Activated B cell treated with CpG ODN at 0.5 μM for 24 hours (primary cell): ENCODE measurements at regions of chr15 and their contacts with region 1.

Region 1: DNA sequence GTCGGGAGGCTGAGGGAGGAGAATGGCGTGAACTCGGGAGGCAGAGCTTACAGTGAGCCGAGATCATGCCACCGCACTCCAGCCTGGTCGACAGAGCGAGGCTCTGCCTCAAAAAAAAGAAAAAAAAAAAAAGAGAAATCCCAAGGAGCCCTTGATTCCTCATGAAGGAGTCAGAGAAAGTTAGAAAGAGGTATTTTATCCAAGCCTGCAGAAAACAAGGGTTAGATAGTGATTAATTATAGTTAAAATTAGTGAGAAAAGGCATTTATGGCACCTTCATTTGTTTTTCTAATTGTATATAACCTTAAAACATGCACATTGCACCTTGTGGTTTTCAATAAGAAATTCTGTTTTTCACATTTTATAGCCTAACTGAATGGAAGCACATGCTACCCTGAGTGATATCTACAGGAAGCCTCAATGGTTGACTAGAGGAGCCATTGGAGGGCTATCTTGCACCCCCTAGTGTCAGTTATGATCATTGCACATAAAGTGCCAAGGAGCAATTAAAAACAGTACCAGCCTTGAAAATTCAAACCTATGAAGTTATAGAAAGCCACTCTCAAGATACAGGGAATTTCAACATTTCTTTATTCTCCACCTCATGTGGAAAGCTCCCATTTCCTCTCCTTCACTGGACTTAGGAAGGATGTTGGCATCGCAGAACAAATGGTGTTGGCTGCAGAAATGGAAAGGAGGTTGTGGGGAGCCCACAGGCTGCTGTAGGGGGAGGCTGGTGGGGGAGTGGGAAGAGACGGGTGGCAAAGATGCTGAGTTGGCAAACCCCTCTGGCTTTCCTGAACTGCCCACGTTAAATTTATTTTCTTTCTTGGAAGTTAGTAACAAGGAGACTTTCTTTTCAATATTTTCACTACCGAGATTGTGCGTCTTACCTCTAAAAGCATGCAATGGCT is 48.5 kb downstream of the ITGA11 start:
- DNase-seq: no peak
- ATAC-seq: peak; percentile 62
- H3K4me3 Mint-ChIP-seq: no peak overlapping the region
- H3K27ac Mint-ChIP-seq: no peak overlapping the region
- H3K4me1 Mint-ChIP-seq: peaks cover 8% of the 10 kb centered on the region
- H3K27me3 Mint-ChIP-seq: no peaks in the 10 kb centered on the region
- CTCF ChIP-seq: no peak

Region 2: GRCh38 chr15:68304589-68305337 is 78.7 kb before region 1 on chr15:
- CTCF ChIA-PET with region 1: interaction called, 7 read pairs
- POLR2A ChIA-PET with region 1: no interaction called
- intact Hi-C with region 1: loop called (anchors 1 kb)
- DNase-seq: no peak
- ATAC-seq: no peak
- H3K4me3 Mint-ChIP-seq: no peak overlapping the region
- H3K27ac Mint-ChIP-seq: no peak overlapping the region
- H3K4me1 Mint-ChIP-seq: peaks cover 8% of the 10 kb centered on the region
- H3K27me3 Mint-ChIP-seq: peaks cover 3% of the 10 kb centered on the region
- CTCF ChIP-seq: no peak

Region 3: GRCh38 chr15:69375151-69375790 is 991.9 kb after region 1 on chr15:
- CTCF ChIA-PET with region 1: no interaction called
- POLR2A ChIA-PET with region 1: no interaction called
- intact Hi-C with region 1: no loop called
- DNase-seq: no peak
- ATAC-seq: no peak
- H3K4me3 Mint-ChIP-seq: no peak overlapping the region
- H3K27ac Mint-ChIP-seq: no peak overlapping the region
- H3K4me1 Mint-ChIP-seq: no peaks in the 10 kb centered on the region
- H3K27me3 Mint-ChIP-seq: peaks cover 26% of the 10 kb centered on the region
- CTCF ChIP-seq: no peak